Mammary epithelial cell (primary cell): ENCODE measurements at regions of chr2 and their contacts with region 1.

Region 1: DNA sequence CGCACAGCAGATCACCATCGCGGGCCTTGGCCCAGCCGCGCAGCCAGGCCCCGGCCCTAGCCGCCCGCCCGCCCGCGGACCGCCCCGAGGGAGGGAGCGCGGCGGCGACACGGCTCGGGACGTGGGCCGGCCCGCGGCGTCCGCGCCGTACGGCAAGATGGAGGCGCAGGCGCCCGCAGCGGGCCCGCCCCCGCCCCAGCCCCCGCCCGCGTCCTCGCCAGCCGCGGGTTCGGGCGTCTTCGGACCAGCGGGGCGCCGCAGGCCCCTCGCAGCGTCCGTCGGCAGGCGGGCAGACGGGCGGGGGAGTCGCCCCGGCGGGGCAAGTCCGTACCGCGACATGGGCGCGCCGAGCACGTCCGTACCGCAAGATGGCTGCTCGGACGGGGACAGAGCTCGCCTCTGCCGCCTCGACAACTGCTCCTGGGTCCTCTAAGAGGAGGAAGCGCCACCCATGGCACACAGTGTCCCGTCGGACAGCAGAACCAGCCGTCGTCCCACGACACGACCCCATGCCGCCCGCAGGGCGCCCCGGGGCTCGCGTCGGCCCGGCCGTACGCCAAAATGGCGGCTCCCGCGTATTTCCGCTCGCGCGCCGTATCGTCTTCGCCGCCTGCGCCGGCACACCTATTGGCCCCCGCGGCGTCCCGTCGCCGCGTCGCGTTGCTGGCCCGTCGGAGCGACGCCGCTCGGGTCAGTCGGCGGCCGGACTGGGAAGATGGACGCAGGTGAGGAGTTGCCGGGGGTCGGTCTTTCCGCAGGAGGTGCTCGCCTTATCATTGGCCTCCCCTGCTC is at the starts of genes ATG4B and THAP4:
- DNase-seq: peak; percentile 87
- H3K4me3 ChIP-seq: peak within 1 kb of the TSS; percentile 94 to 96 (median 94)
- H3K27ac ChIP-seq: peak within 1 kb of the TSS; percentile 96
- H3K4me1 ChIP-seq: peaks cover 12% of the 10 kb centered on the region
- H3K27me3 ChIP-seq: no peaks in the 10 kb centered on the region
- CTCF ChIP-seq: no peak
- total RNA-seq, gene ATG4B: 70.3 to 81.0 TPM
- total RNA-seq, gene THAP4: 35.8 to 61.1 TPM

Region 2: GRCh38 chr2:241355983-241356870 is 281.0 kb before region 1 on chr2 and contains the start of gene FARP2:
- CTCF ChIA-PET with region 1: no interaction called
- dilution Hi-C with region 1: no loop called
- in situ Hi-C with region 1: no loop called
- intact Hi-C with region 1: loop called (anchors 5 kb)
- DNase-seq: peak; percentile 96
- H3K4me3 ChIP-seq: peak within 1 kb of the TSS; percentile 84 to 92 (median 86)
- H3K27ac ChIP-seq: peak within 1 kb of the TSS; percentile 59
- H3K4me1 ChIP-seq: peaks cover 16% of the 10 kb centered on the region
- H3K27me3 ChIP-seq: no peaks in the 10 kb centered on the region
- CTCF ChIP-seq: no peak
- total RNA-seq, gene FARP2: 38.5 to 40.2 TPM

Region 3: DNA sequence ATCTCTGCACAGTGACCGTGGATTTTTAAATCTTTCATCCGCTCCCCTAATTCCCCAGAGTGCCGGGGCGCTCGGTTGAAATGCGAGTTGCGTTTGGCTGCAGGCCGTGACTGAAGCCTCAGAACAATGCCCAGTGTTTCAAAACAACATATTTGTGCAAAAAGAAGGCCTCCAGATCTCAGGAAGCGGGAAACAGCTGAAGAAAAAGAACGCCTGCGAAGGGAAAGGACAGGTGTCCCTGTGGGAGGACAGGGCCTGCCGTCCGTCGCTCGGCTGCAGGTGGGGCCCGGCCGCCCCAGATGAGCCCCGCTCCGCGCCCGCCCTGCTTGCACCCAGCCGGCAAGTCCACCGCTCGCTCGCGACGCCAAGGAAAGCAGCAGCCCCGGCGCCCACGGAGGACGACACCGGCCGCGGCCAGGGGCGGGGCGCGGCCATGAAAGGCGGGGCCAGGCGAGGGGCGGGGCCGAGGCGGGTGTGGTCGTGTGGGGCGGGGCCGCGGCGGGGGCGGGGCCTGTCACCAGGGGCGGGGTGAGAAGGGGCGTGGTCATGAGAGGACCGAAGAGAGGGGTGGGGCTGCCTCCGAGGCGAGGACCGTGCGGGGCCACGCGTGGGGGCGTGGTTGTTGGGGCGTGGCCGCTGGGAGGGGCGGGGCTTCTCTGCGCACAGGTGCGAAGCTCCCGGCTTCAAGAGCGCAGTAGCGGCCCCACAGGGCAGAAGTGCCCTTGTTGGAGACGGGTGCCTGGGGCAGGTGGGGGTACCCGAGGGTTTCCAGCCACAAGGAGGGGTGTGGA is 96.2 kb before region 1 on chr2:
- CTCF ChIA-PET with region 1: no interaction called
- dilution Hi-C with region 1: no loop called
- in situ Hi-C with region 1: no loop called
- intact Hi-C with region 1: loop called (anchors 5 kb)
- DNase-seq: peak; percentile 56
- H3K4me3 ChIP-seq: peak overlapping the region; percentile 23 to 54 (median 39)
- H3K27ac ChIP-seq: no peak overlapping the region
- H3K4me1 ChIP-seq: peaks cover 18% of the 10 kb centered on the region
- H3K27me3 ChIP-seq: peaks cover 6% of the 10 kb centered on the region
- CTCF ChIP-seq: no peak

Region 4: GRCh38 chr2:241567776-241568175 is 69.4 kb before region 1 on chr2:
- CTCF ChIA-PET with region 1: interaction called, 10 read pairs
- dilution Hi-C with region 1: no loop called
- in situ Hi-C with region 1: no loop called
- intact Hi-C with region 1: no loop called
- DNase-seq: no peak
- H3K4me3 ChIP-seq: no peak overlapping the region
- H3K27ac ChIP-seq: no peak overlapping the region
- H3K4me1 ChIP-seq: peaks cover 12% of the 10 kb centered on the region
- H3K27me3 ChIP-seq: no peaks in the 10 kb centered on the region
- CTCF ChIP-seq: no peak

Region 5: DNA sequence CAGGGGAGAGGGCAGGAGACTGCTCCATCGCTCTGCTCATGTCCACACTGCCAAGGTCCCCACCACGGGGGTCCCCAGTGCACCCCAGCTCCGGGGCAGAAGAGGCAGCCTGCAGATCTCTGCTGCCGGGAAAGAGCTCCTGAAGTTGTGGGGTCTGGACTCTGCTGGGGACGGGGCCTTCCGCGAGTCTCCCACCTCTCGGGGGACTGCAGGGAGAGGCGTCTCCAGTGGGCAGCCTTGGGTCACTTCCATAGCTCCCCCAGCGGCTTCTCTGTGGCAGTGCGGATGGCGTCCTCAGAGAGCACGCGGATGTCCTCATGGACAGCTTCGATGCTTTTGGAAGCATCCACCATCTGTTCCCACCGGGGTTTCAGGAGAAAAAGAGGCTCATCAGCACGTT is 38.7 kb after region 1 on chr2:
- CTCF ChIA-PET with region 1: no interaction called
- dilution Hi-C with region 1: no loop called
- in situ Hi-C with region 1: no loop called
- intact Hi-C with region 1: no loop called
- DNase-seq: no peak
- H3K4me3 ChIP-seq: no peak overlapping the region
- H3K27ac ChIP-seq: no peak overlapping the region
- H3K4me1 ChIP-seq: peaks cover 3% of the 10 kb centered on the region
- H3K27me3 ChIP-seq: no peaks in the 10 kb centered on the region
- CTCF ChIP-seq: no peak

Region 6: GRCh38 chr2:241686649-241687425 is 49.6 kb after region 1 on chr2 and contains the start of gene DTYMK:
- CTCF ChIA-PET with region 1: no interaction called
- dilution Hi-C with region 1: no loop called
- in situ Hi-C with region 1: no loop called
- intact Hi-C with region 1: loop called (anchors 2 kb)
- DNase-seq: peak; percentile 98
- H3K4me3 ChIP-seq: peak within 1 kb of the TSS; percentile 73 to 89 (median 85)
- H3K27ac ChIP-seq: peak within 1 kb of the TSS; percentile 63
- H3K4me1 ChIP-seq: peaks cover 16% of the 10 kb centered on the region
- H3K27me3 ChIP-seq: no peaks in the 10 kb centered on the region
- CTCF ChIP-seq: no peak
- total RNA-seq, gene DTYMK: 10.5 to 49.3 TPM